ENCODE measurements at regions of chr1 and their contacts with region 1.

Region 1: DNA sequence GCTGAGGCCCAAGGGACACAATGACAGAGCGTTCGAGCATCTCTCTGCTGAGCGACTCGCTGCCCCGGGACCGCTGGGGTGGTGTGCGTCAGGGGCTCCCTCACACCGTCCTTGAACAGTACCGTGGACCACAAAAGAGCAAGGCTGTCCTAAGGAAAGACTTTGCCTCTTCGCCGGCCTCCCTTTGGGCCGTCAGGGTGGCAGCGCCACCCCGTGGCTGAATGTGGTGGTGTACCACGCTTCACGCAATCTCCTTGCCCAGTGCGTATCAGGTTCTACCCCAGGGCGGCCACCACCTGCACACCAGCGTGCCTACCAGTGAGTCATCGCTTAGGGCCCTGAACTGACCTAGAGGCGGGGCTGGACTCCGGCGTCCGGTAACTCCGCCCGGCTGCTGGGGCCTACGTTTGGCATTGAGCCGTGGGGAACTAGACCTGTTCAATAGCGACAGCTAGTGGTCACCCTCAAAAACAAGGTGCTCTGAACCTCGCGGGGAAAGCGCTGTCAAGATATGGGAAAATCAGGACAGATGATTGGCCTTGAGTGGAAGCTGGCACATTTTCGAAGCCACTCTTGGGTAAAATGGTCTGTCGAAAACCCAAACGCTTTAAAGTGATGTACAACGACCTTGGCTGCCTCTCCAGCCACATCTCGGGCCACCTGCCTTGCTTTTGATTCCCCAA is 8.1 kb upstream of the TRAF3IP3 start:
- H3K4me3 ChIP-seq: no peak overlapping the region
- H3K27ac ChIP-seq: no peak overlapping the region
- H3K4me1 ChIP-seq: peaks cover 6% of the 10 kb centered on the region; the same call in 1 of the 2 replicates
- CTCF ChIP-seq: peak; percentile 98

Region 2: DNA sequence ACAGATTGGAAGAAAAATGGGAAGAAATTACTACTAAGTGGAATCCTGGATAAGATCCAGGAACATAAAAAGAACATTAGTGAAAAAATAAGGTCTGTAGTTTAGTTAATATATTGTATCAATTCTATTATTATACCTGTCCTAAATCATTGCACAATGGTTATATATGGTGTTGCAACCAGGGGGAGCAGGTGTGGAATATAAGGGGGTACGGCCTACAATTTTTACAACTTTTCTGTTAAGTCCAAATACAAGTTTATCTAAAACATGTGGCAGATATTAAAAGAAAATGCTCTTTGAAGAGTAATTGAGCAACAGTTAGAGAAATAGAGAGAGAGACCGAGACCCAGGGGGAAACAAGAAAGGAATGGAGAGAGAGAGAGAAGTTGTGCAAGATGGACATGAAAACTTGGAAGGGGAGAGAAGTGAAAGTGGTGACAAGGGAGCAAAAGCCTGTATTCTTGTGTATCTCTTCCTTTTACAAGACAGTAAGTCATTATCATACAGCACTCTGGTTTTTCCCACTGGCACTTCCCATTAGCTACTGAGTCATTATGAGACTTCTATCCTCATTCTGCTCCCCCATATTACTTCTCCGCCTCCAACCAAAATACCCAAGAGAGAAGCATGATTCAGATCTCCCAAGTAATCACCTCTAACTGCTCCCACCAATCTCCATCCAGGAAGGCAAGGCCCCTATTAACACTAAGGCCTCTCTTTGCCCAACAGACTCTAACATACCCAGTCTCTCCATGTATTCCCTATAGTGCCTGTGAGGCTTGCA is 14.1 kb before region 1 on chr1:
- CTCF ChIA-PET with region 1: interaction called, 28 read pairs
- POLR2A ChIA-PET with region 1: no interaction called
- H3K4me3 ChIP-seq: no peak overlapping the region
- H3K27ac ChIP-seq: no peak overlapping the region
- H3K4me1 ChIP-seq: no peaks in the 10 kb centered on the region
- CTCF ChIP-seq: no peak

Region 3: GRCh38 chr1:209761011-209761635 is 13.4 kb after region 1 on chr1:
- CTCF ChIA-PET with region 1: interaction called, 12 read pairs
- POLR2A ChIA-PET with region 1: no interaction called
- H3K4me3 ChIP-seq: no peak overlapping the region
- H3K27ac ChIP-seq: no peak overlapping the region
- H3K4me1 ChIP-seq: no peaks in the 10 kb centered on the region
- CTCF ChIP-seq: no peak

Measured in HEK293 (cell line).